Right ventricle myocardium inferior (tissue), 1 donor: ENCODE measurements at regions of chr3 and their contacts with region 1.

Region 1: DNA sequence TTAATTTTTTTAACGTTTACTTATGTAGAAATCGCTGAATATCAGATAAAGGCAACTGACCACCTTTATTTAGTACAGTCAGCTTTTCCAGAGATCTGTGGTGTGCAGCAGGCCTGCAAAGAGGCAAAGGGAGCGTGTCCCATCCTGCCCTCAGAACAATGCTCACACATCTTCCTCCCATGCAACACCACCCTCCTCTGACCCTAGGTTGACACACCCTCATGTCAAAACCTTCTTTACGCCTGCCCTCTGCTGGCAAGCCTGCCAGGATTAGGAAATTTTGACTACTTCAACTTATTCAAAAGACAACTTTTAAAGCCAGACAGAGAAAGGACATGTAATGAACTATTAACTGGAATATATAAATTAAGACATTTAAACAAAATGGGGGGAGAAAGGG is 513.7 kb downstream of the FOXP1 start:
- DNase-seq: peak; percentile 64
- ATAC-seq: peak; percentile 54

Region 2: DNA sequence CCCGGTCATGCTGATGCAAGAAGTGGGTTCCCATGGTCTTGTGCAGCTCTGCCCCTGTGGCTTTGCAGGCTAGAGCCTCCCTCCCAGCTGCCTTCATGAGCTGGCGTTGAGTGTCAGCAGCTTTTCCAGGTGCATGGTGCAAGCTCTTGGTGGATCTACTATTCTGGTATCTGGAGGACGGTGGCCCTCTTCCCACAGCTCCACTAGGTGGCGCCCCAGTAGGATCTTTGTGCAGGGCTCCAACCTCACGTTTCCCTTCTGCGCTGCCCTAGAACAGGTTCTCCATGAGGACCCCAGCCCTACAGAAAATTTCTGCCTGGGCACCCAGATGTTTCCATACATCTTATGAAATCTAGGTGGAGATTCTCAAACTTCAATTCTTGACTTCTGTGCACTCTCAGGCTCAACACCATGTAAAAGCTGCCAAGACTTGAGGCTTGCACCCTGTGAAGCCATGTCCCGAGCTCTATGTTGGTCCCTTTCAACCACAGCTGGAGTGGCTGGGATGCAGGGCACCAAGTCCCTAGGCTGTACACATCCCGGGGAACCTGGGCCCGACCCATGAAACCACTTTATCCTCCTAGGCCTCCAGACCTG is 519.0 kb before region 1 on chr3:
- intact Hi-C with region 1: loop called (anchors 5 kb)
- DNase-seq: peak; percentile 69
- ATAC-seq: peak; percentile 67

Region 3: DNA sequence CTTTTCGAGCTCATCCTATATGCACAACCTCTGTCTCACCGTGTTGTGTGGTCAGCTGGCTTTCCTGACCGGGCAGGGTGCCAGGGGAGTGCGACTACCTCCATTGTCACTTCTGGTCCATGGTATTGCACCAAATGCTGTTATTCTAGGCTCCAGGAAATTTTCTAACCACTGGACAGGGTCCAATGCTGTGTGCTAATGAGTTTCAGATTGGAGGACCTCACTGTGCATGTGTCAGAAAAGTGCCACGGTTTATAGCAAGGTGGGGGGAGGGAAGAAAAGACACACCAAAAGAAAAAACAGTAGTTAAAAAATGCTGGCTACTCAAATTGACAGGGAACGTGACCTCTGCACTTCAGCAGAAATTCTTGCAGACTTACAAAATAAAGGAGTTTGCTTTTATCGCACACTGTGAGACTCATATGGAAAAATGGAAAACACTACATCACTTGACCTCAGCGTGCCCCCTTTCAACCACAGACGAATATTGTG is 33.7 kb after region 1 on chr3:
- intact Hi-C with region 1: loop called (anchors 5 kb)
- DNase-seq: peak; percentile 87
- ATAC-seq: peak; percentile 56

Region 4: GRCh38 chr3:71262364-71263265 is 192.8 kb after region 1 on chr3:
- intact Hi-C with region 1: no loop called
- DNase-seq: no peak
- ATAC-seq: no peak